ENCODE measurements at regions of chr17 and their contacts with region 1.

Region 1: DNA sequence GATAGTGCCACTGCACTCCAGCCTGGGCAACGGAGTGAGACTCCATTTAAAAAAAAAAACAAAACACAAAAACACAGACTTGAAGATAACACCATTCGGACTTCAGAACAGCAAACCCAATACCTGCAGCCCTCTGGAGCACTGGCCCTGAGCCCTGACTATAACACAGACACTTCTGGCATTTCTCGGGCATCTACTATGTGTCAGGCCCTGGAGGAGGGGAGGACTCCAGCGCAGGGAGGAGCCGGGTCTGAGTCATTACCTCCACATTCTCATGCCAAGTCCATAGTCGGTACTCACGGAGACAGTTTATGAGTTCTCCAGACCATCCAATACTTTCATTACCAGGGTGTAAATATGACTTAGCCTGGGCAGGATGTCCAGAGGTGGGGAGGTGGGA is 48.8 kb downstream of the PITPNM3 start:
- DNase-seq: peak; percentile 84 to 88
- H3K4me3 ChIP-seq: no peak overlapping the region
- H3K27ac ChIP-seq: peak overlapping the region; percentile 86
- H3K4me1 ChIP-seq: peaks cover 55% of the 10 kb centered on the region
- H3K27me3 ChIP-seq: no peaks in the 10 kb centered on the region
- CTCF ChIP-seq: no peak

Region 2: DNA sequence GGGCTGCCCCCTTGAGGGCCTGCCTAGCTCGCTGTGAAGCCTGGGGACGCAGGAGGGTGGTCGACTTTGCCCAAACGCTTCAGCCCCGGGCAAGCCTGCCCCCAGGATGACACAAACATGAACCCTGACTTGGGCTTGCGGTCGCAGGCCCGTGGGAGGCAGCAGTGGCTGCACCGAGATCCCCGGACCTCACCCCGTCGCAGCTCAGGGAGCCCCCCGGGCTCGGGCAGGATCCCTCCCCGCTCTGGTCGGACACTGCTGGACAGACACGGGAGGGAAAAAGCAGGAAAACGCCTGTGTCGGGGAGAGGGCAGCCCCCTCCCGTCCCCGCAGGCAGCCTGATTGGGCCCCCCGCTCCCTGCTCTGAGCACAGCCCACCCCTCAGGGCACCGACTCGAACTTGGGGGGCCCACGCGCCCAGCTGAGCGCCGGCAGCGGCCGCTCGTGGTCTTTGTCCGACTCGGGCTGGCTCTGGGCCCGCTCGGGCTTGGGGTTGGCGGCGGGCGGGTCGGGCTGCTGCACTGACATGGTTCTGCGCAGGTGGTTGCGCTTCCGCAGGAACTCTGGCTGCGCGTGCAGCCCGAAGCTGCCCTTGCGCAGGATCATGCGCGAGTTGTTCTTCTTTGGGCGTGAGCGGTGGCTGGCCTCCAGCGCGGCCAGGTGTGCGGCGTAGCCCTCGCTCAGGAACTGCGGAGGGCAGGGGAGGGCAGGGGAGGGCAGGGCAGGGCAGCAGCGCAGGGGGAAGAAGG is 52.4 kb before region 1 on chr17:
- CTCF ChIA-PET with region 1: no interaction called
- POLR2A ChIA-PET with region 1: interaction called, 4 read pairs
- intact Hi-C with region 1: loop called (anchors 1 kb)
- DNase-seq: no peak
- H3K4me3 ChIP-seq: no peak overlapping the region
- H3K27ac ChIP-seq: no peak overlapping the region
- H3K4me1 ChIP-seq: peaks cover 12% of the 10 kb centered on the region
- H3K27me3 ChIP-seq: no peaks in the 10 kb centered on the region
- CTCF ChIP-seq: no peak

Region 3: DNA sequence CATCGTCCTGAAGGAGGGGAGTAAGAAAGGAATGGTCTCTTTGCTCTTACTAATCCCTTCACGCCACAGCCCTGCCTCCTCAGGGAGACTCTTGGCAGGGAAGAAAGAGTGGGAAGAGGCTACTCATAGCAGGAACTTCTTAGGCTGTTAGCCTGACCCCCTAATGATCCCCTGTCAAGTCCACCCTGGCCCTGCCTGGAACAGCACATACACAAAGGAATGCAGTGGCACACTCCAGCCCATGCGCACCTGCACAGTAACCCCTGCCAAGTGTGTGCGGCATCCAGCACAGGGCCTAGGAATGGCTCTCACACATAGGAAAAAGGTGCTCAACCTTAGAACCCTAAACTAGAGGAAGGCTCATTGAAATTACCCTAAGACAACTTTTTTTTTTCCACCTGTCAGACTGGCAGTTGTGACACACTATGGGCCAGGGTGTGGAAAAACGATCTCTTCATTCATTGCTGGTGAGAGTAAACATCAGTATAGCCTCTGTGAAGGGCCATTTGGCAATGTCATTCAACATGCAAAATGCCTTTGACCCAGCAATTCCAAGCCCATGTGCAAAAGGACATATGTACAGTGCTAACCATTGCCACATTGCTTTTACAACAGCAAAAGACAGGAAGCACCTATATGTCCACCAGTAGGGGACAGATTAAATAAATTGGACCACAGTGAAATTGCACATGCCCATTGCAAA is 13.1 kb before region 1 on chr17:
- CTCF ChIA-PET with region 1: interaction called, 4 read pairs
- POLR2A ChIA-PET with region 1: interaction called, 5 read pairs
- intact Hi-C with region 1: loop called (anchors 1 kb)
- DNase-seq: peak; percentile 77 to 85
- H3K4me3 ChIP-seq: no peak overlapping the region
- H3K27ac ChIP-seq: no peak overlapping the region
- H3K4me1 ChIP-seq: peaks cover 11% of the 10 kb centered on the region
- H3K27me3 ChIP-seq: no peaks in the 10 kb centered on the region
- CTCF ChIP-seq: no peak

Region 4: GRCh38 chr17:6523330-6523729 is 15.8 kb after region 1 on chr17:
- CTCF ChIA-PET with region 1: interaction called, 3 read pairs
- POLR2A ChIA-PET with region 1: interaction called, 6 read pairs
- intact Hi-C with region 1: loop called (anchors 1 kb)
- DNase-seq: peak; percentile 85 to 91
- H3K4me3 ChIP-seq: no peak overlapping the region
- H3K27ac ChIP-seq: peak overlapping the region; percentile 74
- H3K4me1 ChIP-seq: peaks cover 41% of the 10 kb centered on the region
- H3K27me3 ChIP-seq: no peaks in the 10 kb centered on the region
- CTCF ChIP-seq: no peak